A673 (cell line): ENCODE measurements at regions of chr7 and their contacts with region 1.

Region 1: DNA sequence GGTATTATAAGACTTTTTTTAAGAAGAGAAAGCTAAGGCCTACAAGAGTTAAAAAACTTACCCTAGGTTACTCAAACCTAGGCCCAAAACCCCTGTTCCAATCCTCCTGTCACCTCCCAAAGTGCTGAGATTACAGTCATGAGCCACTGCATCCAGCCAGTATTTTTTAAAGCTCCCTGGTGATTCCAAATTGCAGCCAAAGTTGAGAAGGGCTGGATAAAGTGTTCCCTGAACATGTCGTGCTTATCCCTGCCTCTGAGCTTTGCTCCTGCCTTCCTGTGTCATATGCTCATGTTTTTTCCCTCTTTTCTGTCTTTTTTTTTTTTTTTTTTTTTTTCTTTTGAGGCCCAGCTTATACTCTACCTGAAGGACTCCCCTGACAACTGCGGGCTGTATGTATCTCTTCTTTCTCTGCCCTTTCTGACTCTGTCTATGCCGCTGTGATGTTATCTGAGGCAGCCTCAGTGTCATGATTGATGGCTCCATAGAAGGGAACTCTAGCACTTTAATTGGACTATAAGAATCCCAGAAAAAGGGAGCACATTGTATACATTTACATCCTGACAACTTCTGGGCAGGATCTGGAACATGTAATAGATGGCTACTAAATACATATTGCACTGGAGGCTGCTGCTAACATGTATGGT is 8.0 kb downstream of the AKR1B10 start:
- DNase-seq: no peak
- H3K4me3 ChIP-seq: no peak overlapping the region
- H3K27ac ChIP-seq: no peak overlapping the region
- H3K4me1 ChIP-seq: no peaks in the 10 kb centered on the region
- H3K27me3 ChIP-seq: no peaks in the 10 kb centered on the region
- CTCF ChIP-seq: no peak

Region 2: DNA sequence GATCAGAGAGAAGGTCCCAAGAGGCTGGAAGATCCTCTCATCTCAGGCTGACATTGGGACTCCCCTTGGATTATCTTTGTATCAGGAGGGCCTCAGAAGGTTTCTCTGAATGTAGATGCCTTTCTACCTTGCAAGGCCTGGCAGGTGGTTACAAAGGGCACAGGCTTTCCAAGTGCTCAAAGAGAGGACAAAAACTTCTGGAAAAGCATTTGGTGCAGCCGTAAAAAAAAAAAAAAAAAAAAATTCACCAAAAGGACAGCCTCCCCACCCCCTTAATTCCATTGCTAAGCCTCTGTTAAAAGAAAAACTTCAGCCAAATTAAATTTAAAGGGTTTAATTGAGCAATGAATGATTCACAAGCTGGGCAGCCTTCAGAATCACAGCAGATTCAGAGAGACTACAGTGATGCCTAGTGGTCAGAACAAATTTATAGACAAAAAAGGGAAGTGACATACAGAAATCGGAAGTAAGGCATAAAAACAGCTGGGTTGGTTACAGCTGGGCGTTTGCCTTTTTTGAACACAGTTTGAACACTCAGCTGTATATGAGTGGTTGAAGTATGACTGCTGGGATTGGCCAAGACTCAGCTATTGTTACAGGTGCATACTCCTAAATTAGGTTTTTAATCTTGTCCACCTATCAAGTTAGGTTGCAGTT is 450.8 kb before region 1 on chr7:
- CTCF ChIA-PET with region 1: no interaction called
- POLR2A ChIA-PET with region 1: no interaction called
- intact Hi-C with region 1: no loop called
- DNase-seq: peak; percentile 36
- H3K4me3 ChIP-seq: no peak overlapping the region
- H3K27ac ChIP-seq: no peak overlapping the region
- H3K4me1 ChIP-seq: no peaks in the 10 kb centered on the region
- H3K27me3 ChIP-seq: no peaks in the 10 kb centered on the region
- CTCF ChIP-seq: no peak

Region 3: GRCh38 chr7:134547397-134548054 is 12.1 kb after region 1 on chr7:
- CTCF ChIA-PET with region 1: interaction called, 10 read pairs
- POLR2A ChIA-PET with region 1: no interaction called
- intact Hi-C with region 1: no loop called
- DNase-seq: peak; percentile 81
- H3K4me3 ChIP-seq: peak overlapping the region; percentile 31
- H3K27ac ChIP-seq: no peak overlapping the region
- H3K4me1 ChIP-seq: peaks cover 14% of the 10 kb centered on the region
- H3K27me3 ChIP-seq: peaks cover 8% of the 10 kb centered on the region
- CTCF ChIP-seq: peak; percentile 99